Activated T-helper 2 cell treated with anti-CD3 and anti-CD28 coated beads, Interferon-gamma antibody, Interleukin-2, Interleukin-4, amounts not matched to agents 10 μg/mL and 5 μg/mL and 100 μg/mL, durations not matched to agents 14 hours and 24 hours and 36 hours (primary cell): ENCODE measurements at regions of chr1 and their contacts with region 1.

Region 1: DNA sequence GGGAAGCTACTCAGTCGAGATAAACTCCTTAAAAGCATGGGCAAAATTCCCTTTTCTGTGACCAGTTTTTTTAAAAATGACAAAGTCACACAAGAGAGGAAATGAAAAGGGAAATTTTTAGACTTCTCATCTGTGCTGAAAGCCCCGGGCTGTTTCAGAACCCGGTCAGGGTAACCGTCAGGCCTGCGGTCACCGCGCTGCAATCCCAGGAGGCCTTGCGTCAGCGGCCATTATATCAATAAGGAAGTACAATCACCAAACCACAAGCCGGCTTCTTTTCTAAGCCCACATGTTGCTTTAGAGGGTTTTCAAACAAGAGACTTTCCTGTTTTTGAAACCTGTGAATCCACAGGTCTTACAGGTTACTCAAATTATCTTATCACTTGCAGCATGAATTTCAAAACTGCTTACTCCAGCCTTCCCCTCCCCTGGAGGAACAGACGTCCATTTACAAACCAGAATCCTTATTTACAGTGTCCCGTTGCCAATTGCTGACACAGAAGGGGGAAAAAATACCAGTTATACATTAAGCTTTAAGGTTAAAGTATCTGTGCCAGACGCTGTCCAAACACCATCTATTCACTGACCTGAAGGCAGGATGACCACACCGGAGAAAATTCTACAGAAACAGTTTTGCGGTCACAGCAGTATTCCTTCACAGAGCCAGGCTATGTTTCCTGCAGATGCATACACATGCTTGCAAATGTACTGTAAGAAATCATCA is 165.3 kb downstream of the TOMM20 start:
- DNase-seq: peak; percentile 87
- H3K4me3 Mint-ChIP-seq: peak overlapping the region; percentile 62
- H3K27ac Mint-ChIP-seq: peak overlapping the region; percentile 93
- H3K4me1 Mint-ChIP-seq: peaks cover 70% of the 10 kb centered on the region
- H3K27me3 Mint-ChIP-seq: no peaks in the 10 kb centered on the region

Region 2: GRCh38 chr1:234610348-234611152 is 352.8 kb before region 1 on chr1:
- intact Hi-C with region 1: loop called (anchors 1 kb)
- DNase-seq: peak; percentile 86
- H3K4me3 Mint-ChIP-seq: peak overlapping the region; percentile 88
- H3K27ac Mint-ChIP-seq: peak overlapping the region; percentile 98
- H3K4me1 Mint-ChIP-seq: peaks cover 39% of the 10 kb centered on the region
- H3K27me3 Mint-ChIP-seq: peaks cover 2% of the 10 kb centered on the region

Region 3: GRCh38 chr1:234772345-234773147 is 190.8 kb before region 1 on chr1:
- intact Hi-C with region 1: loop called (anchors 2 kb)
- DNase-seq: peak; percentile 86
- H3K4me3 Mint-ChIP-seq: peak overlapping the region; percentile 71
- H3K27ac Mint-ChIP-seq: peak overlapping the region; percentile 97
- H3K4me1 Mint-ChIP-seq: peaks cover 58% of the 10 kb centered on the region
- H3K27me3 Mint-ChIP-seq: no peaks in the 10 kb centered on the region

Region 4: DNA sequence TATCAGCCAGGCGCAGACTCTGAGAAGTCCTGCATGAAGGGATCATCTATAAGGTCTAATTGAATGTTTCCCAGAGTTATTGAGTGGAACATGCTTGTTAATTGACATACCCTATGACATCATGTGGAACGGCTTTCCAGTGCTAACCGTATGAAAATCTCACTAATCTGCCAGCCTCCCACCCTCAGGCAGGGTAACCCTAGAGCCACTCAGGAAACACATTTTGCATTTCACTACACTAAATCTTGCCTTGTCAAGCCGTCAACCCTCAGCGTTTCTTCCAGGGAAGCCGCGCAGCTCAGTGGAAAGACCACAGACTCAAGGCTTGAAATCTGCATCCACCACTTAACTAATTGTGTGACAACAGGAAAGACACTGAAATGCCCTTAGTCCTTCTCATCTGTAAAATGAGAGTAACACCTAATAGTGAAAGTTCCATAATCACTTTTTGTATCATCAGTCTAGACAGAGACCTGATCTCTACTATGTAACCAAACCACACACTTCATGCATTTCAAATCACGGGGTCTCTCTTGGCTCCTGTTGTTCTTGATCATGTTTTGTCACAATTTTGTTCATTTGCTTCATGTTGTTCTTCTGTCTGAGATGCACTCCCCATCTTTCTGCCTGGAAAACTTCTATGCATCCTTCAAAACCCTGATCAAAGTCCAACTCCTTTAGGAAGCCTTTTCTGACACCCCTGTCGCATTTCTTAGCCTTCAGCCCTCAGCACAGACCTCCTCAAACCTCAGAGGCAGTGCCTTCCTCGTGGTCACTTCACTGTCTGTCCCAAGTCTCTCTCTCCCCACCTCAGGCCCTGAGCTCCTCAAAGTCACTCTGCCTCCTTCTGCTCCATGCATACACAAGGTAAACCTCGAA is 81.2 kb before region 1 on chr1:
- intact Hi-C with region 1: loop called (anchors 1 kb)
- DNase-seq: peak; percentile 25
- H3K4me3 Mint-ChIP-seq: no peak overlapping the region
- H3K27ac Mint-ChIP-seq: peak overlapping the region; percentile 75
- H3K4me1 Mint-ChIP-seq: peaks cover 56% of the 10 kb centered on the region
- H3K27me3 Mint-ChIP-seq: no peaks in the 10 kb centered on the region

Region 5: GRCh38 chr1:234978397-234979295 is 15.3 kb after region 1 on chr1:
- intact Hi-C with region 1: loop called (anchors 1 kb)
- DNase-seq: no peak
- H3K4me3 Mint-ChIP-seq: peak overlapping the region; percentile 91
- H3K27ac Mint-ChIP-seq: peak overlapping the region; percentile 97
- H3K4me1 Mint-ChIP-seq: peaks cover 82% of the 10 kb centered on the region
- H3K27me3 Mint-ChIP-seq: no peaks in the 10 kb centered on the region

Region 6: DNA sequence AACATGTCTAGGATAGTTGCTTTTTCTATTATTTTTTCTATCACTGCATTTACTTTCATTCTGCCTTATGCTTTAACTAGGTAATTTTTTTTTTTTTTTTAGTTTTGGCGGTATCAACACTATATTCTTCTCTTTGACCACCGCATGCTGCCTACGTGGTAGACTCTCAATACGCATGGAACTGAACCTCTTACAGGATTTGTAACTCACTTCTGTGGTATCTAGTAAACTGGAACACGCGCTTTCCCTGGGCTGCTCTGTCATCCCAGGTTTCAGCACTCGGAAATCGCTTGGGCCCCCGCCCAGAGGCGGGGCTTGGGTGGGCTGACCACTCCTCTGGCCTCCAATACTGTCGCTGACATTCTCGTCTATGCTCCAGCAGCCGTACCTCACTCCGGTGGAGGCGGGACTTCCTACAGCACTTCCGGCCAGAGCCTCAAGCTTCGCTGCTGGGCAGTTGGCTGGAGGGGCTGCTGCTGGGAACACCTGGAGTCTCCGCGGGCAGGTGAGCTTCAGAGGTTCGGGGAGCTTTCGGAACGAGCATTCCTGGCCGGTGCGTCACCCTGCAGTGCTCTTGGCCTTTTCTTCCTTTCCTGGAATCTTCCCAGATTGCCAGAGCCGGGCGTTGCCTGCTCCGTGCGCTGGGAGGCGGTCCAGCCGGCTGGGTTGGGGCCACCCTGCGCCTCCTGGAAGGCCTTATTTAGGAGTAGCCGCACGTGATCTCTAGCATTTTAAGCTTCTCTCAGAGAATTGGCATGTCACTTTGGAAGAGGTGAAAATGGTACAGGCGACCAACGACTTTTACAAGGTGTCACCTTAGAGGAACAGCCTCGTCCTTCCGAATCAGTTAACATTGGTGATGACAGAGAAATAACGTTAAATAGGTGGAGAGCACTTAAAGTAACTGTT is 403.9 kb after region 1 on chr1 and contains the start of gene TBCE:
- intact Hi-C with region 1: no loop called
- DNase-seq: peak; percentile 85
- H3K4me3 Mint-ChIP-seq: peak within 1 kb of the TSS; percentile 97
- H3K27ac Mint-ChIP-seq: peak within 1 kb of the TSS; percentile 82
- H3K4me1 Mint-ChIP-seq: peaks cover 26% of the 10 kb centered on the region
- H3K27me3 Mint-ChIP-seq: no peaks in the 10 kb centered on the region
- total RNA-seq, gene TBCE: 25.0 and 28.2 TPM in 2 replicates